Activated naive CD4-positive, alpha-beta T cell treated with anti-CD3 and anti-CD28 coated beads, Interleukin-2, amount 10 ng/mL, durations not matched to agents 7 days and 5 days (primary cell): ENCODE measurements at regions of chr2 and their contacts with region 1.

Region 1: DNA sequence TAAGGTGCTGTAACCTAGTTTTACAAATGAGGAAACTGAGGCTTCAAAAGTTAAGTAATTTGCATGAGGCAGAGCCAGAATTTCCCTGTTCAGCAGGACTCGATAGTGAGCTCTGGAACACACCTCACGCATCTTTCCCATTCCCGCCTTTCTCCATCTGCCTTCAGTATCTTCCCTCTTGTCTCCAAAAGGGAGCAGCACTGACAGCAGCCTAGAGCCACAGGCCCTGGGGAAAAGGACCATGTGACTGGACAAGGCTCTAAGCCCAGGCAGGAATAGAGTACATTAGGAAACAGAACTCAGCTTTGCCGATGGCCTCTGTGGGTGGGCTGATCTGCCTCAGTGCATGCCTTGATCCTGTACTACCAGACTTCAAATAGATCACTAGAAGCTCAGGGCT is 21.5 kb downstream of the GPR155 start:
- DNase-seq: no peak
- H3K4me3 Mint-ChIP-seq: no peak overlapping the region
- H3K27ac Mint-ChIP-seq: no peak overlapping the region
- H3K4me1 Mint-ChIP-seq: peaks cover under 1% of the 10 kb centered on the region
- H3K27me3 Mint-ChIP-seq: no peaks in the 10 kb centered on the region

Region 2: GRCh38 chr2:174235680-174236079 is 229.6 kb before region 1 on chr2:
- CTCF ChIA-PET with region 1: no interaction called
- DNase-seq: no peak
- H3K4me3 Mint-ChIP-seq: no peak overlapping the region
- H3K27ac Mint-ChIP-seq: no peak overlapping the region
- H3K4me1 Mint-ChIP-seq: peaks cover 13% of the 10 kb centered on the region
- H3K27me3 Mint-ChIP-seq: no peaks in the 10 kb centered on the region

Region 3: GRCh38 chr2:174400853-174401252 is 64.5 kb before region 1 on chr2:
- CTCF ChIA-PET with region 1: no interaction called
- DNase-seq: no peak
- H3K4me3 Mint-ChIP-seq: no peak overlapping the region
- H3K27ac Mint-ChIP-seq: no peak overlapping the region
- H3K4me1 Mint-ChIP-seq: peaks cover 11% of the 10 kb centered on the region
- H3K27me3 Mint-ChIP-seq: no peaks in the 10 kb centered on the region

Region 4: DNA sequence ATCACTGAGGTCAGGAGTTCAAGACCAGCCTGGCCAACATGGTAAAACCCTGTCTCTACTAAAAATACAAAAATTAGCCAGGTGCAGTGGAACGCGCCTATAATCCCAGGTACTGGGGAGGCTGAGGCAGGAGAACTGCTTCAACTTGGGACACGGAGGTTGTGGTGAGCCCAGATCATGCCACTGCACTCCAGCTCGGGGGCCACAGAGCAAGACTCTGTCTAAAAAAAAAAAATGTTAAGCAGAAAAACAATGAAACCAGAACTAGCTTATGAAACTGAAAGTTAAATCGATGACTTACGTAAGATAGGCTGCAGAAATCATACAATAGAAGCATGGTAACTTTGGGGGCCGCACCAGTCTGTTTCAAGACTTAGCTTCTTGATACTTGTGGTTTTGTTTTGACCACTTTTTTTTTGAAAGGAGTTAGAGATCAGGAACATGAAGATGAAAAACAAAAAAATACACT is 27.7 kb after region 1 on chr2:
- CTCF ChIA-PET with region 1: interaction called, 12 read pairs
- DNase-seq: peak; percentile 83
- H3K4me3 Mint-ChIP-seq: peak overlapping the region; percentile 74
- H3K27ac Mint-ChIP-seq: peak overlapping the region; percentile 100
- H3K4me1 Mint-ChIP-seq: peaks cover 82% of the 10 kb centered on the region
- H3K27me3 Mint-ChIP-seq: no peaks in the 10 kb centered on the region

Region 5: GRCh38 chr2:174522553-174522952 is 57.2 kb after region 1 on chr2:
- CTCF ChIA-PET with region 1: interaction called, 53 read pairs
- DNase-seq: no peak
- H3K4me3 Mint-ChIP-seq: no peak overlapping the region
- H3K27ac Mint-ChIP-seq: no peak overlapping the region
- H3K4me1 Mint-ChIP-seq: peaks cover 23% of the 10 kb centered on the region
- H3K27me3 Mint-ChIP-seq: peaks cover 7% of the 10 kb centered on the region

Region 6: DNA sequence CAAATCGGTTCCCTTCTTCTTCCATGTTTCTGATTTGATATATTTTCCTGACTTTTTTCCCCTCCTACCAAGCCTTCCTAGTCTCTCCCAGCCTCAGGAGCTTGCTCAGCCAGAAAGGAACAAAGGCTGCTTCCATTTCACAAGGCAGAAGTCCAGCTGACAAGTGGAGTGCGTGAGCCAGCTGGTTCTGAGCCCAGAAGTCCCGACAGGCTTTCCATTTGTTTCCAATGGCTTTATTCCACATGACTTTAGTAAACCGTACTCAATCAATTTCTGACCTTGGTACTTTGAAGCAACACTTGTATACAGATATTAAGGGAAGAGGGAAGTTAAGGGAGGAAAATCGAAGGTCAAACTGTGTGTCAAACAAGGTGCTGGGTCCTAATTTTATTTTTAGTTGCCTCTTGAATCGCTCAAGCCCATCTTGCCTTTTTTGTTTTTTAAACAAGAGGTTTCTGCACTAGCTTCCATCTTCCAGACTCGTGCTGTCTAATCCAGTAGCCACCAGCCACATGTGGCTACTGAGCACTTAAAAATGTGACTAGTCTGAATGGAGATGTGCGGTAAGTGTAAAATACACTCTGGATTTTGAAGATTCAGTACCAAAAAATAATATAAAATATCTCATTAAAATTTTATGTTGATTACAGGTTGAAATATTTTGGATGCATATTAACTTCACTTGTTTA is 96.1 kb after region 1 on chr2:
- CTCF ChIA-PET with region 1: interaction called, 11 read pairs
- DNase-seq: no peak
- H3K4me3 Mint-ChIP-seq: no peak overlapping the region
- H3K27ac Mint-ChIP-seq: no peak overlapping the region
- H3K4me1 Mint-ChIP-seq: peaks cover 4% of the 10 kb centered on the region
- H3K27me3 Mint-ChIP-seq: no peaks in the 10 kb centered on the region

Region 7: GRCh38 chr2:174590928-174591648 is 125.8 kb after region 1 on chr2:
- CTCF ChIA-PET with region 1: no interaction called
- DNase-seq: no peak
- H3K4me3 Mint-ChIP-seq: peak overlapping the region; percentile 24
- H3K27ac Mint-ChIP-seq: peak overlapping the region; percentile 80
- H3K4me1 Mint-ChIP-seq: peaks cover 65% of the 10 kb centered on the region
- H3K27me3 Mint-ChIP-seq: no peaks in the 10 kb centered on the region

Region 8: GRCh38 chr2:174634130-174635014 is 169.0 kb after region 1 on chr2:
- CTCF ChIA-PET with region 1: no interaction called
- DNase-seq: peak; percentile 67
- H3K4me3 Mint-ChIP-seq: peak overlapping the region; percentile 93
- H3K27ac Mint-ChIP-seq: peak overlapping the region; percentile 98
- H3K4me1 Mint-ChIP-seq: peaks cover 67% of the 10 kb centered on the region
- H3K27me3 Mint-ChIP-seq: no peaks in the 10 kb centered on the region

Region 9: GRCh38 chr2:174682578-174683391 is 217.5 kb after region 1 on chr2:
- CTCF ChIA-PET with region 1: interaction called, 58 read pairs
- DNase-seq: peak; percentile 75
- H3K4me3 Mint-ChIP-seq: peak overlapping the region; percentile 89
- H3K27ac Mint-ChIP-seq: peak overlapping the region; percentile 88
- H3K4me1 Mint-ChIP-seq: peaks cover 54% of the 10 kb centered on the region
- H3K27me3 Mint-ChIP-seq: peaks cover 4% of the 10 kb centered on the region

Region 10: DNA sequence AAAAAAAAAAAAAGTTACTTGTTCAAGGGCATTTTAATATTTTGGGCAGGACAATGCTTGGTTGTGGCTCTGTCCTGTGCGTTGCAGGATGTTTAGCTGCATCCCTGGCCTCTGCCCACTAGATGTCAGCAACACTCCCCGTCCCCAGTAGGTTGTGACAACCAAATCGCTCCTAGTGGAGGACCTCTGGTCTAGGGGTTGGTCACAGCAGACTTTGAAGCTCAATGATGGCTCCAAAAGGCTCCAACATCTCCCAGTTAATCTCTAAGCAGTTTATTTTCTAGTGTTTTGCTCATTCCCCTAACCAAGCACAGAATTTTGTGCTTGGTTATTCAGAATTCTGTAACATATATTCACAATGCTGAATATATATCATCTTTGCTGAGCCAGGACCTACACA is 231.9 kb after region 1 on chr2:
- CTCF ChIA-PET with region 1: interaction called, 24 read pairs
- DNase-seq: peak; percentile 78
- H3K4me3 Mint-ChIP-seq: no peak overlapping the region
- H3K27ac Mint-ChIP-seq: no peak overlapping the region
- H3K4me1 Mint-ChIP-seq: peaks cover 2% of the 10 kb centered on the region
- H3K27me3 Mint-ChIP-seq: peaks cover 54% of the 10 kb centered on the region